Activated naive CD8-positive, alpha-beta T cell treated with anti-CD3 and anti-CD28 coated beads, Interleukin-2, amount 10 ng/mL, durations not matched to agents 7 days and 5 days (primary cell): ENCODE measurements at regions of chr4 and their contacts with region 1.

Region 1: GRCh38 chr4:140095694-140096482 is 58.1 kb downstream of the MAML3 start:
- DNase-seq: peak; percentile 68
- ATAC-seq: peak; percentile 71
- H3K4me3 Mint-ChIP-seq: peak overlapping the region; percentile 87
- H3K27ac Mint-ChIP-seq: peak overlapping the region; percentile 96
- H3K4me1 Mint-ChIP-seq: peaks cover 78% of the 10 kb centered on the region
- H3K27me3 Mint-ChIP-seq: no peaks in the 10 kb centered on the region

Region 2: GRCh38 chr4:140012688-140013486 is 83.0 kb before region 1 on chr4:
- POLR2A ChIA-PET with region 1: no interaction called
- DNase-seq: peak; percentile 36
- ATAC-seq: peak; percentile 86
- H3K4me3 Mint-ChIP-seq: no peak overlapping the region
- H3K27ac Mint-ChIP-seq: no peak overlapping the region
- H3K4me1 Mint-ChIP-seq: peaks cover 8% of the 10 kb centered on the region
- H3K27me3 Mint-ChIP-seq: no peaks in the 10 kb centered on the region

Region 3: DNA sequence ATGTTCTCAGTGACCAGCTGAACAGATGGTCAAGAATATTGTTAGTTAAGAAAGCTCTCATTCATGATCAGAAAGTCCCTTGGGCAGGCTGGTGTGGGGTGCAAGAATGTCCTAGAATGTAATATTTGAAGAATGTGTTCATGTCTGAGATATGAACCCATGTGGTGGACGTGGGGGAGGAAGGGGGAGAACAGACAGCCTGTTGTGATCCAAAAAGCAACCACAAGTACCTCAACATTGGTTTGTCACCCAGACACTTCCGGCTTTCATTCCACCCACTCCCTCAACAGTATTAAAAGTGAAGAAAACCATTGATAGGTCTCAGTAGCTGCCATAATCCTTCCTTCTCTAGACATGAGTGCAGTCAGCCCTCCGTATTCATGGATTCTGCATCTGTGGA is 24.1 kb before region 1 on chr4:
- POLR2A ChIA-PET with region 1: interaction called, 20 read pairs
- DNase-seq: peak; percentile 60
- ATAC-seq: peak; percentile 78
- H3K4me3 Mint-ChIP-seq: peak overlapping the region; percentile 73
- H3K27ac Mint-ChIP-seq: peak overlapping the region; percentile 95
- H3K4me1 Mint-ChIP-seq: peaks cover 44% of the 10 kb centered on the region
- H3K27me3 Mint-ChIP-seq: peaks cover 5% of the 10 kb centered on the region

Region 4: DNA sequence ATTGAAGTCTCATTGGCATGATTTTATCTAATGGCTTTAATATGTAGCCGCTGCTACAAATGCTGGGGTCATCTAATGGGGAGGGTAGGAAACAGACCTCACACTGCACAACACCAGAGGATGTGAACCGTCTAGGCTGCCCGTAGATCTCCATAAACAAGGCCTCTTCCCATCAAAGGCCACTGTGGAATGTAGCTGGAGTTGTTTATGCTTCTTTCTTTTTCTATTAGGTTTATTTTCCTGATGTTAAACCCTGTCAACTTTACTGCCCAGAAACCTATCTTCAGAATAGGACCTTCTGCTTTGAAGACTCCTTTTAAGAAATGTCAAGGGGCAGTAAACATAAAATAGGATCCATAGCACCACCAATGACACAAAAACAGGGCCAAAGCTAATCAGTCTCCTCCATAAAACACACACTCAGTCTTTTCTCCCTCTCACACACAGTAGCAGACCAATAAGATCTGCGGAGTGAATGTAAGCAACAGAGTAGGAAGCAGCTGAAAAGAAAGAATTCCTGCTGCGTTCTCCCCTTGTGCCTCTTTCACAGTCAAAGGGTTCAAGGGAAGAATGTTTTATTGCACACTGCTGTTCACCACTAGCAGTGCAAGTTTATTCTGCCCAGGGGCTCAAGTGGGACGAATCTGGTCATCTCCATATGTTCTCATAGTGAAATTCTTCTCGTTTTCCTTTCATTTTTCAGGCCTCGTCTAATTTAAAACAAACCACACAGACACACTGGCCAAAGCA is 14.1 kb before region 1 on chr4:
- POLR2A ChIA-PET with region 1: interaction called, 10 read pairs
- DNase-seq: no peak
- ATAC-seq: no peak
- H3K4me3 Mint-ChIP-seq: no peak overlapping the region
- H3K27ac Mint-ChIP-seq: no peak overlapping the region
- H3K4me1 Mint-ChIP-seq: peaks cover 20% of the 10 kb centered on the region
- H3K27me3 Mint-ChIP-seq: no peaks in the 10 kb centered on the region

Region 5: DNA sequence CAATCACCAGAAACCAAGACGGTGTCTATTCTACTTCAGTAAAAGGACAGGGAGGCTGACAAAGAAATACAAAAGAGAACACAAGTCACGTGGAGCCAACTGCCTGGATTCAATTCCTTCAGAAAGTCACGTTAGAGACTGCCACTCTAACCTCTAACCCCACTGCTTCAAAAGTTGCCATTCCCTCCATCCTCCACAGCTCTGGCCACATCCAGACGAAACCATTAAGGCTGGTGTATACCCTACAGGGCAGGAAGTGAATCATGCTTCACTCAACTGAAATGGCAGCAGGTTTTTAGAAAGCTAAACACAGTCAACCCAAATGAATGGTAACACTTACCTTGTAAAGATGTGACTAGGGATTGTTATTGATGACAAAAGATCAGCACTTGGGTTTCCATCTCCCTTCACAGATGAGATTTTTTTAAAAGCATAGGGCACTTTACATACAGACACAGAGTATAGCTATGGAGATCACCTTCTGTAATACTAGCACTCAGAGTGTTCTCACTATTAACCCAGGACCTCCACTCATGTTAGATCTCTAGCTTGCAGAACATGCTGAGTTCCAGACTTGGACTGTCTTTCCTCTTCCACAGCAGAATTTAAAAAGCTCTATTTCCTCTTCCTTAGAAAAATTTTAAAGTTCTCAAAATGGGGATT is 20.7 kb after region 1 on chr4:
- POLR2A ChIA-PET with region 1: interaction called, 10 read pairs
- DNase-seq: no peak
- ATAC-seq: peak; percentile 99
- H3K4me3 Mint-ChIP-seq: peak overlapping the region; percentile 63
- H3K27ac Mint-ChIP-seq: peak overlapping the region; percentile 91
- H3K4me1 Mint-ChIP-seq: peaks cover 29% of the 10 kb centered on the region
- H3K27me3 Mint-ChIP-seq: no peaks in the 10 kb centered on the region

Region 6: DNA sequence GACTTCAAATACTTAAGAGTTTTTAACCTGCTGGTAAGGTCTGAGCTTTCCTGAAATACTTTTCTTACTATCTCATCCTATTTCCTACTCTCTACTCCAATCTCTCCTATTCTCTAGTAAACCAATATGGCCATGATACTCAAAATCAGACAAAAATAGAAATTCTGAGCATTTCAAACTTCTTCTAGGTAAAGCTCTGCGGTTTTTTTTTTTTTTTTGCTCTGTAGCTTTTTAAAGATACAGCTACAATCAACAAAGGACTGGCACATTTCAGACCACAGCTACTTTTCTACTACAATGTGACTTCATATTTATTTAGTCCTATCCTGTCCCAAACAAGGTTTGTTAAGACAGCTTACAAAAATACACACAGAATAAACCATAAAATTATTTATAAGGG is 27.0 kb after region 1 on chr4:
- POLR2A ChIA-PET with region 1: interaction called, 26 read pairs
- DNase-seq: no peak
- ATAC-seq: peak; percentile 82
- H3K4me3 Mint-ChIP-seq: peak overlapping the region; percentile 50
- H3K27ac Mint-ChIP-seq: peak overlapping the region; percentile 60
- H3K4me1 Mint-ChIP-seq: peaks cover 26% of the 10 kb centered on the region
- H3K27me3 Mint-ChIP-seq: no peaks in the 10 kb centered on the region